Mammary epithelial cell (primary cell): ENCODE measurements at regions of chr18 and their contacts with region 1.

Region 1: DNA sequence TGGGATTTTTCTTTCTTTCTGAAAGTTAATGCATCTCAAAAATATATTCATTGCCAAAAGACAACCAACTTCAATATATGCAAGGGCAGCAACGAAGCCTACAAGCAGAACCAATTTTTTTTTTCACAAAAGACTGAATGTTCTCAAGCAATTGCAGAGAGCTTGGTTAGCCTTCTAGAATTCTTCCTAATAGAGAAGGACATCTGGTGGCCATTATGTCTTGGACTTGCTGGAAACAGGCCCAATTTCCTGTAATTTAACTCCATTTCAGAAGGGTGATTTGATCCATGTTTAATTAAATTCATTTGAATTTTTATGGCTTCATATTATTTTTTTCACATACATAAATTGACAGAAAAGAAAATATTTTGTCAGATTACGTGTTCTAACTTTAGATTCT is 208.0 kb downstream of the TPGS2 start:
- DNase-seq: no peak
- H3K4me3 ChIP-seq: no peak overlapping the region
- H3K27ac ChIP-seq: no peak overlapping the region
- H3K4me1 ChIP-seq: peaks cover 14% of the 10 kb centered on the region
- H3K27me3 ChIP-seq: no peaks in the 10 kb centered on the region
- CTCF ChIP-seq: peak; percentile 13 to 32

Region 2: GRCh38 chr18:36411745-36412168 is 209.0 kb before region 1 on chr18:
- CTCF ChIA-PET with region 1: no interaction called
- dilution Hi-C with region 1: no loop called
- in situ Hi-C with region 1: no loop called
- intact Hi-C with region 1: loop called (anchors 5 kb)
- DNase-seq: no peak
- H3K4me3 ChIP-seq: no peak overlapping the region
- H3K27ac ChIP-seq: no peak overlapping the region
- H3K4me1 ChIP-seq: peaks cover 4% of the 10 kb centered on the region
- H3K27me3 ChIP-seq: no peaks in the 10 kb centered on the region
- CTCF ChIP-seq: peak; percentile 48 to 63

Region 3: DNA sequence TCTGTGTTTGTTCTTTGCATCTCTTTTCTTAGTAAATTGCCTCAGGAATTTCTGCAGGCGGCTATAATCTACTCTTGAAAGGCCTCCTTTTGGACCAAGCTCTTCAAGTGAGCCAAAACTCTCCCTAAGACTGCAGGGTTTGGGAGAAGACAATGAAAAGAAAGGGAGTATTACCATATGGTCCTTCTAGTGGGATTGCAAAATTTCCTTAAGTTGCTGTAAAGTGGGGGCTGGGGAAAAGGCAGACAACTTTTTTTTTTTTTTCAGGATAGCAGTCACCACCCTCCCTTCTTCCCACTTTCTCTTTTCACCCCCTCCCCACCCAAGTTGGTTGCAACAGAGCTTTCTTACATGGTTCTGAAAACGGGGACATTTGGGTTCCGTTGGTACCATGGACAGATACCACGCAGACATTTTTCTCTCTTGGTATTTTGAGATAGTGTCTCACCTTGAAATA is 139.6 kb before region 1 on chr18:
- CTCF ChIA-PET with region 1: no interaction called
- dilution Hi-C with region 1: no loop called
- in situ Hi-C with region 1: no loop called
- intact Hi-C with region 1: loop called (anchors 5 kb)
- DNase-seq: no peak
- H3K4me3 ChIP-seq: no peak overlapping the region
- H3K27ac ChIP-seq: no peak overlapping the region
- H3K4me1 ChIP-seq: peaks cover 11% of the 10 kb centered on the region
- H3K27me3 ChIP-seq: no peaks in the 10 kb centered on the region
- CTCF ChIP-seq: no peak

Region 4: GRCh38 chr18:36543991-36544725 is 76.6 kb before region 1 on chr18:
- CTCF ChIA-PET with region 1: no interaction called
- dilution Hi-C with region 1: loop called (anchors 5 kb)
- in situ Hi-C with region 1: no loop called
- intact Hi-C with region 1: no loop called
- DNase-seq: peak; percentile 92
- H3K4me3 ChIP-seq: no peak overlapping the region
- H3K27ac ChIP-seq: peak overlapping the region; percentile 55
- H3K4me1 ChIP-seq: peaks cover 20% of the 10 kb centered on the region
- H3K27me3 ChIP-seq: no peaks in the 10 kb centered on the region
- CTCF ChIP-seq: no peak

Region 5: DNA sequence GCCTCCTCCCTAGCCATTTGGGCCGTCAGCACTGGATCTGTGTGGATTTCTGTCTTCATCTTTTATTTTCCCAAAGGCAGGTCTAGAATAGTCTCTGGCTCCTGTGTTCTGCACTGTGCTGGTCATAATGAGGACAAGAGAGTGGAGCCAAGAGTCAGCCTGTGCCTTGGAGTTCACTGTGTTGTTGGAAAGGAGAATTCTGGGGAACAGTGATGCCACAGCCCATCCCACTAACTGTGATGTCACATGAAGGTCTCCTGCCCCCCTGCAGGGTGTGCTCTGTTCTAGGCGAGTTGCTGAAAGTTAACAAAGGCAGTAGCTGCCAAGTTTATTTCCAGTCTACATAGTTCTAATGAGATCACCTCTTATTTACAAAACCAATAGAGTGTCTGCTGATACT is 40.5 kb before region 1 on chr18:
- CTCF ChIA-PET with region 1: no interaction called
- dilution Hi-C with region 1: no loop called
- in situ Hi-C with region 1: no loop called
- intact Hi-C with region 1: loop called (anchors 5 kb)
- DNase-seq: peak; percentile 48
- H3K4me3 ChIP-seq: no peak overlapping the region
- H3K27ac ChIP-seq: peak overlapping the region; percentile 87
- H3K4me1 ChIP-seq: peaks cover 44% of the 10 kb centered on the region
- H3K27me3 ChIP-seq: no peaks in the 10 kb centered on the region
- CTCF ChIP-seq: peak; percentile 3 to 41